Activated CD8-positive, alpha-beta T cell treated with anti-CD3 and anti-CD28 coated beads for 36 hours (primary cell): ENCODE measurements at regions of chr7 and their contacts with region 1.

Region 1: DNA sequence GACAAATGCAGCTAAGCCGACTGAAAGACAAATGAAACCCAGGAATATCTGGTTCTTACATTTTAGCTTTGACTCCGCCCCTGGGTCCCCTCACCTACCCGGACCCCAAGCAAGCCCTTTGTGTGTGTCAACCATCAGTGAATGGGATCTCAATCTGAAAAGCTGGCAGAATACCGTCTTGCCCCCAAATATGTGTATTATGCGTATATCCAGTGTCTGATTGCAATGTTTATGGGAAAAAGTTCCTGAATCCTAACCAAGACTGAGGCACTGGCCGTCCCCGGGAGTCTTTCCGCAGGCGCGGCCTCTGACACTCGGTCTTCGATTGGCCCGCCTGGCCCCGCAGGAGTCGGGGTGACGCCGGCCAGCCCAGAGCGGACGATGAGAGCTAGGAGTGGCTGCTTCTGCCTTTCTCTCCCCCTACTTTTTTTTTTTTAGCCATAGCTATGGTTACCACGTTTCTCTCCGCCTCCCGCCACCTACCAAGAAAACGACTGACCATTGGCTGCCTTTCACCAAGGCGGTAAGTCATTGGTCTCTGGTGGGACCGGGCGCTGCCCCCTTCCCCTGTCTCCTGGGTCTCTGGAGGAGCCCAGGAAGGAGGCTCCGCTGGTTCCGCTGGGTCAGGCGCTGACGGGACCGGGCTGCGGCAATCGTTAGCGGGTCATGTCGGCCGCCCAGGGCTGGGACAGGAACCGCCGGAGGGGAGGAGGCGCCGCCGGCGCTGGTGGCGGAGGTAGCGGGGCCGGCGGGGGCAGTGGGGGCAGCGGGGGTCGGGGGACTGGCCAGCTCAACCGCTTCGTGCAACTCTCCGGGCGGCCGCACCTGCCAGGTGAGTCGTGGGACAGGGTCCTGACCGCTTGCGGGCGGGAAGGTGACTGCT is at the start of gene KLHDC10:
- DNase-seq: peak; percentile 98
- ATAC-seq: peak; percentile 98
- H3K4me3 Mint-ChIP-seq: peak within 1 kb of the TSS; percentile 92
- H3K27ac Mint-ChIP-seq: peak within 1 kb of the TSS; percentile 88
- H3K4me1 Mint-ChIP-seq: peaks cover 35% of the 10 kb centered on the region
- H3K27me3 Mint-ChIP-seq: no peaks in the 10 kb centered on the region
- CTCF ChIP-seq: no peak
- total RNA-seq, gene KLHDC10: 12.8 to 14.3 TPM

Region 2: GRCh38 chr7:130084037-130084875 is 14.0 kb after region 1 on chr7:
- CTCF ChIA-PET with region 1: interaction called, 62 read pairs
- POLR2A ChIA-PET with region 1: no interaction called
- intact Hi-C with region 1: no loop called
- DNase-seq: no peak
- ATAC-seq: peak; percentile 55
- H3K4me3 Mint-ChIP-seq: no peak overlapping the region
- H3K27ac Mint-ChIP-seq: no peak overlapping the region
- H3K4me1 Mint-ChIP-seq: peaks cover 22% of the 10 kb centered on the region
- H3K27me3 Mint-ChIP-seq: no peaks in the 10 kb centered on the region
- CTCF ChIP-seq: peak; percentile 73

Region 3: DNA sequence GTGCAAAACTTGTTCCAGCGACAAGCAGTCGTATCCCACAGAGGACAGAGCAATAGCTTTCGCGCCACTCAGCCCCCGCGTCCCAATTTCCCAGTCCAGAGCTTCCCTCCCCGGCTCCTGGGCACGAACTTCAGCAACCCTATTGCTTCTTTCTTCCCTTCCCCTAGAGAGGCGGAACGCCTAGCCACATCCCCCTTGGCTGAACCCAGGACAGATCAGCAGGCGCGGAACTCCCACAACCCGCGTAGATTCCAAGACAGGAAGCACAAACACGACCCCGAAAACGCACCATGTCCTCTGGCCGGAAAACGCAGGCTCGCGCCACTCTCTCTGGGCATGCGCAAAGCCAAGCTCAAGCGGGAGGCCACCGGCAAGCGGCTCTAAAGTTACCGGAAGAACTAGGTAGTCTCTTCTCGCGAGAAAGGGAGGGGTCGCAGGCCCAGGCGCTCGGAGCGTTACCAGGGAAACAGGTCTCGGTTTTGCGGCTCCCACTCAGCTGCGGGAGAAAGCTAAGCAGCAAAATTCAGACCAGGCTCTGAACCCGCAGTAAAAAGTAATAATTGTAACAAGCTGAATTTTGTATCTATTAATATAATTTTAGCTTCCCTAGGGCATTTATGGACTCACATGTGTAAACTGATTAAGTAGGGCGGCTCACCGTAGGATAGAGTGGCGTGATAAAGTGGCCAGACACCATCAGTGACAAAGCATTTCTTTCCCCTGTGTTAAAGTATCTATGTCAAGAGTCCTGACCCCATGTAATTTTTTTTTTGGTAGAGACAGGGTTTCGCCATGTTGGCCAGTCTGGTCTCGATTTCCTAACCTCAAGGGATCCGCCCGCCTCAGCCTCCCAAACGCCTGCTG is 135.1 kb after region 1 on chr7 and contains the start of gene TMEM209:
- CTCF ChIA-PET with region 1: interaction called, 8 read pairs
- POLR2A ChIA-PET with region 1: interaction called, 3 read pairs
- intact Hi-C with region 1: loop called (anchors 10 kb)
- DNase-seq: peak; percentile 96
- ATAC-seq: peak; percentile 99
- H3K4me3 Mint-ChIP-seq: peak within 1 kb of the TSS; percentile 91
- H3K27ac Mint-ChIP-seq: peak within 1 kb of the TSS; percentile 100
- H3K4me1 Mint-ChIP-seq: peaks cover 30% of the 10 kb centered on the region
- H3K27me3 Mint-ChIP-seq: no peaks in the 10 kb centered on the region
- CTCF ChIP-seq: no peak
- total RNA-seq, gene TMEM209: 36.1 to 45.6 TPM

Region 4: DNA sequence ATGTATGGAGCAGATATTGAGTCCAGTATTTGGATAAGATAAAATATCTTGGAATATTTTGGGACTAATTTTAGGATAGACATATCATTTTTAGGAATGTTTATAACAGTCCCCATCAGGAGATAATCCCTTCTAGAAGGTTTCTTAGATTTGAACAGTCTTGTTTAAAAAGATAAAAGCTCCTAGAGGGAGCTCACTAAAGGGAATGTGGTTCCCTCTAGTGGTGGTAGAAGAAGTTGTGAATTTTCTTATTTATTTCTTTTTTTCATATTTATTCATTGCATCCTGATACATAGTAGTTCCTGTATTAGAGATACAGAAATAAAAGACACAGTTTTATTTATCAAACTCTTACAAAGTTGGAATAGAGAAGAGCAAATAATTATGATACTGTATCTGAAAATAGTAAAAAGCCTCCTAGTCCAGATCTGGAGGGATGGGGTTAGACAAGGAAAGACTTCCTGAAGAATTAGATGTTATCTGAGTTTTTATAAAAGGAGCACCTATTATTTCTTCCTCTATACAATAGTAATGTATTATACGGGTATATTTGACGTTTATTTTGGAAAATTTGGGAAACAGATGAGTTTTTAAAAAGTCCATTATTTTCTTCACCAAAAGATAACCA is 688.3 kb after region 1 on chr7:
- CTCF ChIA-PET with region 1: interaction called, 18 read pairs
- POLR2A ChIA-PET with region 1: no interaction called
- intact Hi-C with region 1: no loop called
- DNase-seq: no peak
- ATAC-seq: no peak
- H3K4me3 Mint-ChIP-seq: no peak overlapping the region
- H3K27ac Mint-ChIP-seq: no peak overlapping the region
- H3K4me1 Mint-ChIP-seq: no peaks in the 10 kb centered on the region
- H3K27me3 Mint-ChIP-seq: peaks cover 2% of the 10 kb centered on the region
- CTCF ChIP-seq: peak; percentile 92

Region 5: GRCh38 chr7:130831817-130832481 is 761.7 kb after region 1 on chr7:
- CTCF ChIA-PET with region 1: interaction called, 10 read pairs
- POLR2A ChIA-PET with region 1: no interaction called
- intact Hi-C with region 1: no loop called
- DNase-seq: no peak
- ATAC-seq: peak; percentile 49
- H3K4me3 Mint-ChIP-seq: no peak overlapping the region
- H3K27ac Mint-ChIP-seq: no peak overlapping the region
- H3K4me1 Mint-ChIP-seq: no peaks in the 10 kb centered on the region
- H3K27me3 Mint-ChIP-seq: peaks cover 2% of the 10 kb centered on the region
- CTCF ChIP-seq: peak; percentile 96